ENCODE measurements at regions of chr1 and their contacts with region 1.

Region 1: DNA sequence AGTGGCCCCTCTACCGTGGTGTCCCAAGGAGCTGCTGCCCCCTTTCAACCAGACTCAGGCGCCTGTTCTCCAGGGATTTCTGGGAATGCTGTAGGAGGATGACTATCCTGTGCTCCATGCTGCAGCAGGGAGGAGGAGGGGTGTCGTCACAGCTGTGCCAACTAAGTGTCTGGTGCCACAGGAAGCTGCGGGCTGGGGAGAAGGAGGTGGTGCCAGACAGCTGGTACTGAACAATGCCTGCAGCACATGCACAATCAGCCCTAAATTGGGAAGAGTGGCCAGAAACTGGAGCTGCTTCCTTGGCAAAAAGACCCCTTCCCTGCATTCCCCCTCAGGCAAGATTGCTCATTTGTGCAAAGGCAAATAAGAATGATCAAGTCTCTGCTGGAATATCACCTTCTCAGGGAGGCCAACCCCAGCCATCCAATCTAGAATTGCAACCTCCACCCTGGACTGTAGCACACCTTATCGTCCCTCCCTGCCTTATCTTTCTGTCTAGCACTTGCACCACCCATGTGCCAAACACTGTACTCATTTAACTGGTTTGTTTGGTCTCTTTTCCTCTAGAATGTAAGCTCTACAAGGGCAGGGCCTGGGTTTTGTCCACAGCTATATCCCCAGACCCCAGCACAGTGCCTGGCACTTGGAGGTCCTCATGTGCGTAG is 33.3 kb downstream of the LAMB3 start:
- DNase-seq: no peak
- H3K4me3 ChIP-seq: no peak overlapping the region
- H3K27ac ChIP-seq: no peak overlapping the region
- H3K27me3 ChIP-seq: no peaks in the 10 kb centered on the region
- CTCF ChIP-seq: no peak

Region 2: GRCh38 chr1:209576798-209577197 is 42.1 kb before region 1 on chr1:
- CTCF ChIA-PET with region 1: interaction called, 15 read pairs
- POLR2A ChIA-PET with region 1: no interaction called
- DNase-seq: peak; percentile 39
- H3K4me3 ChIP-seq: no peak overlapping the region
- H3K27ac ChIP-seq: no peak overlapping the region
- H3K27me3 ChIP-seq: peaks cover 15% of the 10 kb centered on the region
- CTCF ChIP-seq: peak; percentile 97

Region 3: GRCh38 chr1:209827384-209828262 is 208.7 kb after region 1 on chr1 and contains the start of gene UTP25:
- CTCF ChIA-PET with region 1: no interaction called
- POLR2A ChIA-PET with region 1: no interaction called
- DNase-seq: peak; percentile 95
- H3K4me3 ChIP-seq: peak within 1 kb of the TSS; percentile 71
- H3K27ac ChIP-seq: peak within 1 kb of the TSS; percentile 75
- H3K27me3 ChIP-seq: no peaks in the 10 kb centered on the region
- CTCF ChIP-seq: peak; percentile 84
- polyA plus RNA-seq, gene UTP25: 7.5 and 8.6 TPM in 2 replicates

Region 4: DNA sequence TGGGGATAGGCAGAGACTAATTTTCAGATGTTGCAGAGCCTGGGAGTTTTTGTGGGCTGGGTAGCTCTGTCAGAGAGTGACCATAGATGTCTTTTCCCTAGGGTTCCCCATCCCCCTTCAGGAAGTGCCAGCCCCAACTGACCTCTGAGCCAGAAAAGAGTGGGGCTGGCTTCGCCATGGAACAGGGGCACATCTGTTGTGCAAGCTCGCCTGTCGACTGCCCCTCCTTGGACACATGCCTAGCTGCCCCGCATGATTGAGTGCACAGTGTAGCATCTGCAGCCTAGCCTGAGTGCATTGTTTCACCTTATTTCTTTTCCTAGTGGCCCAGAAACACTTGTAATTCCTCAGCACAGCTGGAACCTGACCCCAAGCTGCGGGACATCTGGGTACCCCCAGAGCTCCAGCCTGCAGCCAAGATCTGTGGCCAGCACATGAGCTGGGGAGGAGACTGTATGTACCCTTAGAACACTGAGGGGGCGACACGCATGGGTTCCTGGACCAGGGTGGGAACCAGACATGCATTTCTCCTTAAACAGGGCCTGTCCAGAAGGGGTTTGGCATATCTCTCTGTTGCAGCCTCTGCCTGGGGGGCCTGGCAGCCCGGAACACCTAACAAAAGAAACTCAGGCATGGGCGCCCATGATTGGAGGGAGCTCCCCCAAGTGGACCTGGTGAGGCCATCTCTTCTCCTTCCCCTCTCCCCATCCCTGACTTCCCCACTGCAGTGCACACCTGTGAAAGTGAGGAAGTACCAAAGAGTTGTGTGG is 374.4 kb after region 1 on chr1:
- CTCF ChIA-PET with region 1: no interaction called
- POLR2A ChIA-PET with region 1: no interaction called
- DNase-seq: no peak
- H3K4me3 ChIP-seq: no peak overlapping the region
- H3K27ac ChIP-seq: no peak overlapping the region
- H3K27me3 ChIP-seq: no peaks in the 10 kb centered on the region
- CTCF ChIP-seq: no peak

Measured in AG04450 (cell line).